ENCODE measurements at regions of chr1 and their contacts with region 1.

Region 1: DNA sequence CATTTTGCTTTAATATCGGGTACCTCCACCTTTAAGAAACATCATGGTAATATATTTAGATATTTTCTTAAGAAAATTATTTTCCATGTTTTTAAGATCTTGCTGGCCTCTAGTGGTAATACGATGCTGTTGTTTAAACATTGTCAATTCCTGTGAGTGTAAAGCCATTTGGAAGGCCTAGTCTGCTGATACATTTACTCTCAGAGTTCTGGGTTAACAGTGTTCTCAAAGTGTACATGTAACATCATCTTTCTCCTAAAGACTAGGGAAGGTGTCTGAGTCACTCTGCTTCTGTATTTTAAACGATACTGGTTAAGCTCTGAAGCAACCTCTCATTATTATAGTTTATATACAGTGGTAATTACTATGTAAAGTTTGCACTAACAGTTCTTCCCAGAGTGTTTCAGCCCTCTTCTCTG is 189.1 kb downstream of the RASAL2 start:
- DNase-seq: peak in 1 of 2 donors; percentile 52
- H3K4me3 ChIP-seq: no peak overlapping the region
- H3K27ac ChIP-seq: no peak overlapping the region
- H3K4me1 ChIP-seq: peaks cover 0 to 39% (median 3%) of the 10 kb centered on the region in 4 donors
- H3K27me3 ChIP-seq: no peaks in the 10 kb centered on the region
- CTCF ChIP-seq: peak in 4 of 7 experiments; percentile 15 to 33 (median 20)
- EP300 ChIP-seq: no peak
- POLR2A ChIP-seq: no peak

Region 2: GRCh38 chr1:178031856-178032320 is 251.1 kb before region 1 on chr1:
- intact Hi-C with region 1: loop called (anchors 10 kb)
- DNase-seq: peak; percentile 92 to 93
- H3K4me3 ChIP-seq: no peak overlapping the region
- H3K27ac ChIP-seq: no peak overlapping the region
- H3K4me1 ChIP-seq: peaks cover 0 to 25% (median 11%) of the 10 kb centered on the region in 4 donors
- H3K27me3 ChIP-seq: no peaks in the 10 kb centered on the region
- CTCF ChIP-seq: peak in 6 of 7 experiments; percentile 26 to 86 (median 74)
- EP300 ChIP-seq: no peak
- POLR2A ChIP-seq: no peak

Measured in stomach (tissue), 19 donors.